Naive thymus-derived CD4-positive, alpha-beta T cell (primary cell): ENCODE measurements at regions of chr5 and their contacts with region 1.

Region 1: GRCh38 chr5:128201065-128201926 is 117.7 kb downstream of the SLC12A2 start:
- DNase-seq: peak; percentile 68 to 90 (median 84)
- ATAC-seq: peak; percentile 87
- H3K4me3 ChIP-seq: peak overlapping the region; percentile 15
- H3K4me3 Mint-ChIP-seq: peak overlapping the region; percentile 9 to 77 (median 62)
- H3K27ac ChIP-seq: no peak overlapping the region
- H3K27ac Mint-ChIP-seq: peak overlapping the region in 7 of 9 donors; percentile 29 to 88 (median 75)
- H3K4me1 ChIP-seq: peaks cover 0 to 23% of the 10 kb centered on the region in 2 donors
- H3K4me1 Mint-ChIP-seq: peaks cover 21 to 51% (median 44%) of the 10 kb centered on the region in 7 donors
- H3K27me3 ChIP-seq: no peaks in the 10 kb centered on the region
- H3K27me3 Mint-ChIP-seq: peaks cover 0 to 9% (median 1%) of the 10 kb centered on the region in 5 donors

Region 2: DNA sequence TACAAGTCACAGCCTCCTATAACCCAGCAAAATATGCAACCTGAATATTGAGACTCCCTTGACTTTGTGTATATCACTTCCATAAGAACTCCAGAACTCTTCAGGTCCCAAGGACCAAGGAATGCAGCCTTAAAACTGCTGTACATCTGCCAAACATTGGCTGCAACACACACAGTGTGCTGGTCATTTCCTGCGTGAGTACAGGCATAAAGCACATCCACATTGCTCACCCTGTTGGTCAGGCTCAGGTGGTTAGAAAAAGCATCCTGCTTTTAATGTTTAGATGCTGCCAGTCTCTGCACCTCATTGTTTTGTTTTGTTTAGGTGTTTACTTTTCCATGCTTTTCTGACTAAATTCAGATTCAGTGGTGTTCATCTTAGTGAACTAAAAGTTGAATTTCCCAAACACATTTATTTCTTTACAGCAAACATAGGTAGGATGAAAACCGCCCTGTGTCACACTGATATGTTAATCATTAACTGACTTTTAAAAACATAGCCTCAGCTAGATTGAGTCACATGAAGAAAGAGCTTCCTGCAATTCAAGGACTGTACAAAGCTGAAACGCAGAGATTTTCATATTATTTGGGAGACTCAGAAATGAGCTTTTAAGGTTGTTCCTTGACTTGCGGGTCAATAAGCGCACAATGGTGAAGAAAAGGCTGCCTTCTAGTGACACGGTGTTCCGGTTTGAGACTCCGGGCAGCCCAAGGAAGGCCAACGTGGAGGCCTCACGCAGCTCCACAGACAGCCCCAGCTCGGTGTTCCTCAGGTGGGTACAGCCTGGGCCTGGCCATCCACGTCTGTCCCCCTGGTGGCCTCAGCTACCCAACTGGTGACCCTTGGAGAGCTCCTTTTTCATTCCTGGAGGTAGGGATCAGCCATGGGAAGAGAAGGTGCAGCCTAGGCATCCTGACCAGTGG is 1830.2 kb before region 1 on chr5:
- CTCF ChIA-PET with region 1: no interaction called
- POLR2A ChIA-PET with region 1: no interaction called
- intact Hi-C with region 1: no loop called
- DNase-seq: no peak
- ATAC-seq: no peak
- H3K4me3 ChIP-seq: no peak overlapping the region
- H3K4me3 Mint-ChIP-seq: no peak overlapping the region
- H3K27ac ChIP-seq: no peak overlapping the region
- H3K27ac Mint-ChIP-seq: no peak overlapping the region
- H3K4me1 ChIP-seq: peaks cover 9 to 15% of the 10 kb centered on the region in 2 donors
- H3K4me1 Mint-ChIP-seq: peaks cover 5 to 19% (median 18%) of the 10 kb centered on the region in 7 donors
- H3K27me3 ChIP-seq: no peaks in the 10 kb centered on the region
- H3K27me3 Mint-ChIP-seq: no peaks in the 10 kb centered on the region

Region 3: GRCh38 chr5:127517480-127518318 is 683.6 kb before region 1 on chr5 and contains the start of gene PRRC1:
- CTCF ChIA-PET with region 1: no interaction called
- POLR2A ChIA-PET with region 1: no interaction called
- intact Hi-C with region 1: loop called in 1 of 2 experiments (anchors 5 kb)
- DNase-seq: peak; percentile 63 to 80 (median 74)
- ATAC-seq: peak; percentile 99
- H3K4me3 ChIP-seq: peak within 1 kb of the TSS; percentile 94
- H3K4me3 Mint-ChIP-seq: peak within 1 kb of the TSS; percentile 87 to 92 (median 89)
- H3K27ac ChIP-seq: peak within 1 kb of the TSS; percentile 89
- H3K27ac Mint-ChIP-seq: peak within 1 kb of the TSS; percentile 48 to 91 (median 82)
- H3K4me1 ChIP-seq: peaks cover 0 to 18% of the 10 kb centered on the region in 2 donors
- H3K4me1 Mint-ChIP-seq: peaks cover 25 to 48% (median 38%) of the 10 kb centered on the region in 7 donors
- H3K27me3 ChIP-seq: no peaks in the 10 kb centered on the region
- H3K27me3 Mint-ChIP-seq: peaks cover under 1 to 7% (median 6%) of the 10 kb centered on the region in 5 donors
- total RNA-seq, gene PRRC1: 34.6 to 56.6 (median 49.4) TPM

Region 4: GRCh38 chr5:127746756-127747155 is 454.5 kb before region 1 on chr5:
- CTCF ChIA-PET with region 1: no interaction called
- POLR2A ChIA-PET with region 1: no interaction called
- intact Hi-C with region 1: loop called (anchors 1 kb)
- DNase-seq: peak in 2 of 9 donors; percentile 3 to 6
- ATAC-seq: no peak
- H3K4me3 ChIP-seq: no peak overlapping the region
- H3K4me3 Mint-ChIP-seq: no peak overlapping the region
- H3K27ac ChIP-seq: no peak overlapping the region
- H3K27ac Mint-ChIP-seq: no peak overlapping the region
- H3K4me1 ChIP-seq: no peaks in the 10 kb centered on the region
- H3K4me1 Mint-ChIP-seq: no peaks in the 10 kb centered on the region
- H3K27me3 ChIP-seq: no peaks in the 10 kb centered on the region
- H3K27me3 Mint-ChIP-seq: peaks cover 0 to 18% (median 10%) of the 10 kb centered on the region in 5 donors

Region 5: DNA sequence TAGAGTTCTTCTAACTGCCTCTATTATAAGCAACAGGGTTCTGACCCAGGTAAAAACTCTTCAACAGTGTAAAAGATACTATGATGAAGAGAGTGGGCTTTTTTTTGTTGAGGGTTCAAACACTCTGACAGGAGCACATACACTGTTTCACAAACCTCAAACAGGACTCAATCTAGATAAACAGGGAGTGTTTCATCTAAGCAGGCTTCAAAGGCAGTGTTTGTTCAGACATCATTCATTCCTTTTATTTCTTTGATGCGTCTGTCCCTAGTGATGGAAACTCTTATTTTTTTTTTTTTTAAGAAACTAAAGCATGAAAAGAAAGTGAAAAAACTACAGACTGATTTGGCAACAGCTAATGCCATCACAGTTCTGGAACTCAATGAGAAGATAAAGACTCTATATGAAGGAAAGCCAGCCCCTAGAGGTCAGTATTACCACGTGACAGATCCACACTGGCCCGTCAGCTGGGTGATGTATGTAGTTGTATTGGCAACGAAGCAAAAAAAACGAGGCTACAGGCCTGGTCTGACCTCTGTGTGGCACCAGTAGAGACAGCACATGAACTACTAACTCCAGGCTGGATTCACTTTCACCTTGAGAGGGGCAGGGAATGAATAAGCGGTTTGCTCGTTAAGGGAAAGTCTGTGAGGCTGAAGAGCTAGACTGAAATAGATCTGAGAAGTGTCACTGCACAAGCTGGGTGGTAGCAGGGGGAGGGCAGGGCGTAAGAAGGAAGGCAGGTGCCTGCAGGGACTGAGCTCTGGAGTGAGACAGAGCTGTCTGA is 325.9 kb before region 1 on chr5:
- CTCF ChIA-PET with region 1: interaction called, 3 read pairs
- POLR2A ChIA-PET with region 1: no interaction called
- intact Hi-C with region 1: loop called (anchors 1 kb)
- DNase-seq: peak in 4 of 9 donors; percentile 10 to 27 (median 16)
- ATAC-seq: peak; percentile 44
- H3K4me3 ChIP-seq: no peak overlapping the region
- H3K4me3 Mint-ChIP-seq: no peak overlapping the region
- H3K27ac ChIP-seq: no peak overlapping the region
- H3K27ac Mint-ChIP-seq: no peak overlapping the region
- H3K4me1 ChIP-seq: no peaks in the 10 kb centered on the region
- H3K4me1 Mint-ChIP-seq: peaks cover 0 to 3% (median 0%) of the 10 kb centered on the region in 7 donors
- H3K27me3 ChIP-seq: no peaks in the 10 kb centered on the region
- H3K27me3 Mint-ChIP-seq: peaks cover 0 to 7% (median 5%) of the 10 kb centered on the region in 5 donors

Region 6: GRCh38 chr5:129094087-129094923 is 893.0 kb after region 1 on chr5 and contains the start of gene ISOC1:
- CTCF ChIA-PET with region 1: no interaction called
- POLR2A ChIA-PET with region 1: no interaction called
- intact Hi-C with region 1: loop called in 1 of 2 experiments (anchors 5 kb)
- DNase-seq: peak; percentile 89 to 95 (median 94)
- ATAC-seq: peak; percentile 96
- H3K4me3 ChIP-seq: peak within 1 kb of the TSS; percentile 72
- H3K4me3 Mint-ChIP-seq: peak within 1 kb of the TSS; percentile 89 to 95 (median 92)
- H3K27ac ChIP-seq: peak within 1 kb of the TSS; percentile 79
- H3K27ac Mint-ChIP-seq: peak within 1 kb of the TSS; percentile 52 to 94 (median 90)
- H3K4me1 ChIP-seq: peaks cover 7 to 8% of the 10 kb centered on the region in 2 donors
- H3K4me1 Mint-ChIP-seq: peaks cover 13 to 47% (median 35%) of the 10 kb centered on the region in 7 donors
- H3K27me3 ChIP-seq: no peaks in the 10 kb centered on the region
- H3K27me3 Mint-ChIP-seq: peaks cover 0 to 24% (median 0%) of the 10 kb centered on the region in 5 donors
- total RNA-seq, gene ISOC1: 5.3 to 18.9 (median 11.9) TPM